ENCODE measurements at regions of chr1 and their contacts with region 1.

Region 1: GRCh38 chr1:31663622-31664452 is 19.2 kb upstream of the PEF1 start:
- DNase-seq: peak; percentile 82
- H3K4me3 ChIP-seq: no peak overlapping the region
- H3K27ac ChIP-seq: no peak overlapping the region
- H3K4me1 ChIP-seq: peaks cover 0 to 34% (median 23%) of the 10 kb centered on the region in 4 donors
- H3K27me3 ChIP-seq: no peaks in the 10 kb centered on the region
- CTCF ChIP-seq: peak; percentile 95 to 99 (median 96)
- EP300 ChIP-seq: no peak
- POLR2A ChIP-seq: no peak

Region 2: DNA sequence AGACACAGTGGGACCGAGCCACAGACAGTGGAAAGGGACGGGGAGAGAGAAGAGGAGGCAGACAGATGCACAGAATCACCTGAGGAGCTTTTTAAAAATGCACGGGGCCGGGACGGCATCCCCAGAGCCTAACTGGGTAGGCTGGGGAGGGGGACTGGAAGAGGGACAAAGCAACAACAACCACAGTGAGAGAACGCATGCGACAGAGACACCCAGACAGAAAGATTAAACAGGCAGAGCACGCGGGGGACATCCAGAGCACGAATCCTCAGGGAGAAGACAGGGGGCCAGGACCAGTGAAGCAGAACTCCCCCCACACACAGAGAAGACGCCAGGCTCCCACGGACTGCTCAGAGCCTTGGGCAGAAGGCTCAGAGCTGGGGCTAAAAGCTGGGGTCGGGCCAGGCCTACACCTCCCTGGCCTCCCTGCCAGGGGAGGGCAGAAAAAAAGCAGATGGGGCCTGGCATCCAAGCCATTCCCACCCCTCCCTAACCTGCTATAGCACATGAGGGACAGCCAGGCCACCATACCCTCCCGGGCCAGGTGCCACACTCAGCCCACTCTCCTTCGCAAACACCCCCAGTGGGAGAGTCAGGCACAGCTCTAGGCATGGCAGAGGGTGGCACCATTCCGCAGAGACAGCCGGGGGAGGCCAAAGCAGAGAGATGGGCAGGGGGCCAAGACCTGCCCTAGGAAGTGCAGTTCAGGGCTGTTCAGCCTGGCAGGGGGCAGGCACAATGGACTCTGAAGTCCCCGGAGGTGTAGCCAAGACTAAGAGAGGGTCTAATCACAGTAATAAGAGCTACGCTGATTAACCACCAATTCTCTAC is 69.8 kb after region 1 on chr1:
- intact Hi-C with region 1: no loop called
- DNase-seq: no peak
- H3K4me3 ChIP-seq: no peak overlapping the region
- H3K27ac ChIP-seq: no peak overlapping the region
- H3K4me1 ChIP-seq: peaks cover 0 to 5% (median 0%) of the 10 kb centered on the region in 4 donors
- H3K27me3 ChIP-seq: no peaks in the 10 kb centered on the region
- CTCF ChIP-seq: no peak
- EP300 ChIP-seq: no peak
- POLR2A ChIP-seq: no peak

Region 3: GRCh38 chr1:31745096-31745945 is 81.5 kb after region 1 on chr1:
- intact Hi-C with region 1: loop called (anchors 1 kb)
- DNase-seq: peak; percentile 81
- H3K4me3 ChIP-seq: no peak overlapping the region
- H3K27ac ChIP-seq: no peak overlapping the region
- H3K4me1 ChIP-seq: no peaks in the 10 kb centered on the region
- H3K27me3 ChIP-seq: no peaks in the 10 kb centered on the region
- CTCF ChIP-seq: peak in 3 of 4 experiments; percentile 50 to 78 (median 62)
- EP300 ChIP-seq: no peak
- POLR2A ChIP-seq: no peak

Region 4: GRCh38 chr1:32761253-32761880 is 1097.5 kb after region 1 on chr1:
- intact Hi-C with region 1: no loop called
- DNase-seq: no peak
- H3K4me3 ChIP-seq: no peak overlapping the region
- H3K27ac ChIP-seq: peak overlapping the region in 3 of 4 donors; percentile 31 to 80 (median 53)
- H3K4me1 ChIP-seq: peaks cover 0 to 52% (median 34%) of the 10 kb centered on the region in 4 donors
- H3K27me3 ChIP-seq: no peaks in the 10 kb centered on the region
- CTCF ChIP-seq: no peak
- EP300 ChIP-seq: no peak
- POLR2A ChIP-seq: no peak

Measured in sigmoid colon (tissue), 7 donors.